ENCODE measurements at regions of chr1 and their contacts with region 1.

Region 1: DNA sequence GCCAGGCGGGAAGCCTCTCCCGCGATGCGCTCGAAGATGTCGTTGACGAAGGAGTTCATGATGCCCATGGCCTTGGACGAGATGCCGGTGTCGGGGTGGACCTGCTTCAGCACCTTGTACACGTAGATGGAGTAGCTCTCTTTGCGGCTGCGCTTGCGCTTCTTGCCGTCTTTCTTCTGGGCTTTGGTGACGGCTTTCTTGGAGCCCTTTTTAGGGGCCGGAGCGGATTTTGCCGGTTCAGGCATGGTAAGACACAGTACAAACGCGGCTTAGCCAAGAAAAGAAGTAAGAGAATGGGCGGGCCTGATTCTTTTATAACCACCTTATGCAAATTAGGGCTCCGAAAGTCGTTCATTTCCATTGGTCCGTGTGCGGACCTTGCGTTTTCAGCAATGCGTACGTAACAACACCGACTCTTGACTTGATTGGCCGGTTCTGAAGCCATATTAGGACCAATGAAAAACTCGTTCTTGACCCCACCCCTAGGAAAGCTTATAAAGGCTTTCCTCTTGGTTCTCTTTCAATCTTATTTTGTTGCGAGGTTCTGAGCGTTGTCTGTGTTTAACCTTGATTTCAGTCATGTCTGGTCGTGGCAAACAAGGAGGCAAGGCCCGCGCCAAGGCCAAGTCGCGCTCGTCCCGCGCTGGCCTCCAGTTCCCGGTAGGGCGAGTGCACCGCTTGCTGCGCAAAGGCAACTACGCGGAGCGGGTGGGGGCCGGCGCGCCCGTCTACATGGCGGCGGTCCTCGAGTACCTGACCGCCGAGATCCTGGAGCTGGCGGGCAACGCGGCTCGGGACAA is 12.8 kb upstream of the BOLA1 start:
- DNase-seq: peak; percentile 73 to 99 (median 82)
- ATAC-seq: peak; percentile 64
- H3K4me3 ChIP-seq: peak overlapping the region; percentile 69 to 74
- H3K4me3 Mint-ChIP-seq: no peak overlapping the region
- H3K27ac ChIP-seq: peak overlapping the region; percentile 91 to 95
- H3K27ac Mint-ChIP-seq: no peak overlapping the region
- H3K4me1 ChIP-seq: peaks cover 32% of the 10 kb centered on the region
- H3K4me1 Mint-ChIP-seq: peaks cover 13% of the 10 kb centered on the region
- H3K27me3 ChIP-seq: no peaks in the 10 kb centered on the region
- H3K27me3 Mint-ChIP-seq: no peaks in the 10 kb centered on the region
- CTCF ChIP-seq: no peak

Region 2: GRCh38 chr1:149849947-149850360 is 36.6 kb before region 1 on chr1:
- CTCF ChIA-PET with region 1: interaction called, 3 read pairs
- POLR2A ChIA-PET with region 1: interaction called, 168 read pairs
- intact Hi-C with region 1: no loop called
- DNase-seq: peak in 4 of 9 experiments; percentile 6 to 49 (median 18)
- ATAC-seq: no peak
- H3K4me3 ChIP-seq: peak overlapping the region; percentile 56 to 58
- H3K4me3 Mint-ChIP-seq: peak overlapping the region; percentile 86
- H3K27ac ChIP-seq: peak overlapping the region; percentile 59 to 72
- H3K27ac Mint-ChIP-seq: peak overlapping the region; percentile 95
- H3K4me1 ChIP-seq: peaks cover 44% of the 10 kb centered on the region
- H3K4me1 Mint-ChIP-seq: peaks cover 50% of the 10 kb centered on the region
- H3K27me3 ChIP-seq: no peaks in the 10 kb centered on the region
- H3K27me3 Mint-ChIP-seq: no peaks in the 10 kb centered on the region
- CTCF ChIP-seq: no peak

Region 3: DNA sequence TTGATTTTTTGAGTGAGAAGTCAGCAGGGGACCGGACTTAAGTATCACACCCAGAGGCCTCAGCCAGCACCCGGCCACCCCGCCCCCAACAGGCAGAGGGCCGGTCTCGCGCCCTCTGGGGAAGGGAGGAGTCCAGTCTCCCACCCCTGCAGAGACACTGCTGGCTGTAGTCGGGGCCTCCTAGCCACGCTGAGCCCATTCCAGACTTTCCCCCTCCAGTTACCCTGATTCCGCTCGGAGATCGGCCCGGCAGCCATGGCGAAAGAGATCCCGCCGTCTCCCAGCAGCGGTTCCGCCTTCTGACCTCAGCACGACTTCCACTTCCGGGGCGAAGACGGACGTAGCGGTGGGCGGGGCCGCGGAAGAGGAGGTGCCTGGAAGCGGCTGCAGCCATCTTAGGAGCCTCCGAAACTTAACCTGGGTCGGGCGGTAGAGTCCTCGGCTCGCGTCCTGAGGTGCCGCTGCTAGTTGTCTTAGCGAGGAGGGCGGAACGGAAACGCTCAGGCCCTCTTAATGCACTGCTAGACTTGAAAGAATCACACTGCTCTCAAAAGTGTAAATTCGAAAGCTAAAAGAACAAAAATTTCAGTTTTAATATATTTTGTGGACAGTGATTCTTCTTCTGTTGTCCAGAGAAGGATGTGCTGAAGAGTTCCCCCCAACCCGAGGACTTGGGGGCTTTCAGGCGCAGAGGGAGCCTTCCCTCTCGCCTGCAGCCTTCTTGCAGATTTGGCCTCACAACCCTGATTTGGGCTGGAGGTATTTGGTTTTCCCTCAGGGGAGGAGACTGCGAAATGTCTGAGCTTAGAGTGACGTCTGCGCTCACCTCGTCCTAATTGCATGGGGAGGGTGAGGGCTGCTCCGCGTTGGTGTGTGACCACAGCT is 41.1 kb after region 1 on chr1 and contains the start of gene SF3B4:
- CTCF ChIA-PET with region 1: interaction called, 3 read pairs
- POLR2A ChIA-PET with region 1: interaction called, 108 read pairs
- intact Hi-C with region 1: loop called (anchors 1 kb)
- DNase-seq: peak; percentile 91 to 98 (median 96)
- ATAC-seq: peak; percentile 94
- H3K4me3 ChIP-seq: peak within 1 kb of the TSS; percentile 86 to 97
- H3K4me3 Mint-ChIP-seq: peak within 1 kb of the TSS; percentile 94
- H3K27ac ChIP-seq: peak within 1 kb of the TSS; percentile 71 to 95
- H3K27ac Mint-ChIP-seq: peak within 1 kb of the TSS; percentile 91
- H3K4me1 ChIP-seq: peaks cover 34% of the 10 kb centered on the region
- H3K4me1 Mint-ChIP-seq: peaks cover 45% of the 10 kb centered on the region
- H3K27me3 ChIP-seq: no peaks in the 10 kb centered on the region
- H3K27me3 Mint-ChIP-seq: peaks cover 2% of the 10 kb centered on the region
- CTCF ChIP-seq: no peak
- total RNA-seq, gene SF3B4: 52.0 to 59.1 TPM

Region 4: DNA sequence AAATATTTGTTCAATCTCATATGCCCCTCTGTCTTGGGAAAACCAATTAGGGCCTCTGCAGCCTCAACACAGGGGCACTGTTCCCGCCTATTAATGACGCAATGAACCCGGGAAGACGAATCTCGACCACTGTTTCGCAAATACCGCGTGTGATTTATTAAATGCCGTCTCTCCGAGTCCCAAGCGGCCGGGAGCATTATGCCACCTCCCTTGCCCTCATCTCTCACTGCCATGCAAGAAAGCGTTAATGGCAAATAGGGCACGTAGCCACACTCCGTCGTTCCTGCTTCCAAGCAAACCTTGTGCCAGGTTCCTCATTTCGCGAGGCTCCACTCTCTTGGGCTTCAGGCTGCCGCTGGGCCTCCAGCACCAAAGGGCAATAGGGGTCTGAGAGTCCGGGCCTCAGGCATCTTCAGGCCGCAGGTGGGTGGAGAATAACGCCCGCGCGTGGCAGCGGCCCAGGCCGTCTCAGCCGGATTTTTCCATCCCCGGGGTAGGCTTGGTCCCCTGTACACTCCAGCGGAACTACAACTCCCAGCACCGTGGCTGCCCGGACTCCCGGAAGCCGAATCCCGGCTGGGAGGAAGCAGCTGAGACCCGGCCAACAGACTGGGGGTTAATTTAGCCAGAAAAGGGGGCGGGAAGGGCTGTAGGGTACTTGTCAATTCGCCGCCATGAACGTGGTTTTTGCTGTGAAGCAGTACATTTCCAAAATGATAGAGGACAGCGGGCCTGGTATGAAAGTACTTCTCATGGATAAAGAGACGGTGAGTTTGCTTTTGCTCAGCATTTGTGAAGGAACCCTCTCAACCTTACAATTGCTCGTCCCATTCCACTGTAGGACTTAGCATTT is 180.8 kb after region 1 on chr1 and contains the start of gene VPS45:
- CTCF ChIA-PET with region 1: no interaction called
- POLR2A ChIA-PET with region 1: interaction called, 10 read pairs
- intact Hi-C with region 1: no loop called
- DNase-seq: peak; percentile 46 to 89 (median 80)
- ATAC-seq: peak; percentile 90
- H3K4me3 ChIP-seq: peak within 1 kb of the TSS; percentile 72 to 79
- H3K4me3 Mint-ChIP-seq: peak within 1 kb of the TSS; percentile 94
- H3K27ac ChIP-seq: peak within 1 kb of the TSS; percentile 57 to 78
- H3K27ac Mint-ChIP-seq: peak within 1 kb of the TSS; percentile 94
- H3K4me1 ChIP-seq: peaks cover 9% of the 10 kb centered on the region
- H3K4me1 Mint-ChIP-seq: peaks cover 36% of the 10 kb centered on the region
- H3K27me3 ChIP-seq: no peaks in the 10 kb centered on the region
- H3K27me3 Mint-ChIP-seq: no peaks in the 10 kb centered on the region
- CTCF ChIP-seq: no peak
- total RNA-seq, gene VPS45: 5.9 to 6.9 TPM

Region 5: DNA sequence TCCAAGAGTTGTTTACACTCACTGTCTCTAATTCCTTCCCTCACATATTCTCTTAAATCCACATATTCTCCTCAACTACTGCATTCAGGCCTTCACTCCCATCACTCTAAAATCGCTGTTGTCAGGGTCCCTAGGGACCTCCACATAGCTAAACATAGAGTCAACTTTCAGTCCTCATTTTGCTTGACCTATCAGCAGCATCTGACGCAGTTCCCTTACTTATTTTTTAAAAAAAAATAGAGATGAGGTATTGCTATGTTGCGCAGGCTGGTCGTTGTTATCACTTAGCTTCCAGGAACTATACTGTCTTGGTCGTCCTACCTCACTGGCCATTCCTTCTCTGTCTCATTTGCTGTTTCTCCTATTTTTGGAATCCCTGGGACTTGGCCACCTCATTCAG is 251.4 kb after region 1 on chr1:
- CTCF ChIA-PET with region 1: no interaction called
- POLR2A ChIA-PET with region 1: no interaction called
- intact Hi-C with region 1: no loop called
- DNase-seq: no peak
- ATAC-seq: no peak
- H3K4me3 ChIP-seq: no peak overlapping the region
- H3K4me3 Mint-ChIP-seq: no peak overlapping the region
- H3K27ac ChIP-seq: no peak overlapping the region
- H3K27ac Mint-ChIP-seq: no peak overlapping the region
- H3K4me1 ChIP-seq: no peaks in the 10 kb centered on the region
- H3K4me1 Mint-ChIP-seq: no peaks in the 10 kb centered on the region
- H3K27me3 ChIP-seq: no peaks in the 10 kb centered on the region
- H3K27me3 Mint-ChIP-seq: no peaks in the 10 kb centered on the region
- CTCF ChIP-seq: no peak

Region 6: GRCh38 chr1:150186789-150187559 is 300.4 kb after region 1 on chr1:
- CTCF ChIA-PET with region 1: interaction called, 9 read pairs
- POLR2A ChIA-PET with region 1: interaction called, 14 read pairs
- intact Hi-C with region 1: loop called in 1 of 2 experiments (anchors 2 kb)
- DNase-seq: peak in 5 of 9 experiments; percentile 5 to 85 (median 12)
- ATAC-seq: peak; percentile 78
- H3K4me3 ChIP-seq: no peak overlapping the region
- H3K4me3 Mint-ChIP-seq: peak overlapping the region; percentile 32
- H3K27ac ChIP-seq: peak overlapping the region in 1 of 2 experiments; percentile 33
- H3K27ac Mint-ChIP-seq: no peak overlapping the region
- H3K4me1 ChIP-seq: peaks cover 5% of the 10 kb centered on the region
- H3K4me1 Mint-ChIP-seq: peaks cover 7% of the 10 kb centered on the region
- H3K27me3 ChIP-seq: no peaks in the 10 kb centered on the region
- H3K27me3 Mint-ChIP-seq: no peaks in the 10 kb centered on the region
- CTCF ChIP-seq: peak; percentile 91

Measured in CD8-positive, alpha-beta T cell (primary cell).